ENCODE measurements at regions of chr3 and their contacts with region 1.

Region 1: DNA sequence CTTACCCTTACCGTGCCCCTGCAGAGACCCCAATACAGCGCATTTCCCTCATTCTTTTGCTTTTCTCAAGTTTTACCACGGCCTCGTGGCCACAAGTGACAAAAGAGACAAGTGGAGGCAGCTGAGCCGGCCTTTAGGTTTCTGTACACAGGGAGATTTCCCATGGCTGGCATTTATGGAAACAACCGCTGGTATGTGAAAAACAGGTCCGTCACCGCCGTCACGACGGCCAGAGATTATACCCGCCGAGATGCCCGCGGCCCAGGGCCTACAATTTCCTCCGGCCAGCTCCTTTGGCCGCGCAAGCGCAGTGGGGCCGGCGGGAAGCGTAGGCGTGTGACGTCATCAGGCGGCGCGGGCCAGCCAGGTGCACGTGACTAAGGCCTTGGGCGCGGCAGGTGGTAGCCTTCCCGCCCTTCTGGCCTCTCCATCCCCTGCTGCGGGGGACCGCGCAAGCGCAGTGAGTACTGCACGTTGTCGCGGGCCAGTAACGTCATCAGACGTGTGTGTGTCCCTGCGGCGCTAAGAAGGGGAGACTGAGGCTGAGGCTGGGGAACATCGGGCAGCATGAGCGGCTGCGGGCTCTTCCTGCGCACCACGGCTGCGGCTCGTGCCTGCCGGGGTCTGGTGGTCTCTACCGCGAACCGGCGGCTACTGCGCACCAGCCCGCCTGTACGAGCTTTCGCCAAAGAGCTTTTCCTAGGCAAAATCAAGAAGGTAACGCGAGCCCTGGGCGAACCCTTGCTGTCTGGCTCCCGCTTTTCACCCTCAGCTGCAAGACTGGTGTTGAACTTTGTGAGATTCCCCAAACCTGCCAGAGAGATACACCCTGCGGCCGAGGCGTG is at the start of gene ACAD9:
- DNase-seq: peak; percentile 99
- H3K4me3 ChIP-seq: peak within 1 kb of the TSS; percentile 81 to 91 (median 90)
- H3K27ac ChIP-seq: peak within 1 kb of the TSS; percentile 95
- H3K4me1 ChIP-seq: peaks cover 23% of the 10 kb centered on the region
- H3K27me3 ChIP-seq: peaks cover 3 to 6% of the 10 kb centered on the region in 2 experiments
- CTCF ChIP-seq: no peak
- POLR2A ChIP-seq: peak; percentile 97
- total RNA-seq, gene ACAD9: 56.0 and 65.8 TPM in 2 replicates

Region 2: GRCh38 chr3:128617557-128618397 is 261.6 kb before region 1 on chr3:
- CTCF ChIA-PET with region 1: interaction called, 10 read pairs
- POLR2A ChIA-PET with region 1: no interaction called
- dilution Hi-C with region 1: no loop called
- intact Hi-C with region 1: loop called (anchors 1 kb)
- DNase-seq: peak; percentile 98
- H3K4me3 ChIP-seq: peak overlapping the region; percentile 48 to 65 (median 58)
- H3K27ac ChIP-seq: peak overlapping the region; percentile 53
- H3K4me1 ChIP-seq: peaks cover 35% of the 10 kb centered on the region
- H3K27me3 ChIP-seq: no peaks in the 10 kb centered on the region
- CTCF ChIP-seq: peak; percentile 86 to 98
- POLR2A ChIP-seq: no peak

Region 3: DNA sequence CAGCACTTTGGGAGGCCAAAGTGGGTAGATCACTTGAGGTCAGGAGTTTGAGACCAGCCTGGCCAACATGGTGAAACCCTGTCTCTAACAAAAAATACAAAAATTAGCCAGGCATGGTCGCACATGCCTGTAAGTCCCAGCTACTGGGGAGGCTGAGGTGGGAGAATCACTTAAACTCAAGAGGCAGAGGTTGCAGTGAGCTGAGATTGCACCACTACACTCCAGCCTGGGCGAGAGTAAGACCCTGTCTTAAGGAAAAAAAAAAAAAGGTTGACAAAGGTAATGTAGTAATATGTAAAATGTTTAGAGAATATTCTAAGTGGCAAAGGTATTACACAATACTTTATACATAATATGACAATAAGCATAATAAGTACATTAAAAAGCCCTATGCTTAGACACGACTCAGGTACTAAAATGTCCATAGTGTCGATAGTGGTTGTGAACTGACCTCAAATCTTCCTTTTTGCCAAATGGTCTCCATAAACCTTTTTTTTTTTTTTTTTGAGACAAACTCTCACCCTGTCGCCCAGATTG is 245.2 kb before region 1 on chr3:
- CTCF ChIA-PET with region 1: no interaction called
- POLR2A ChIA-PET with region 1: no interaction called
- dilution Hi-C with region 1: no loop called
- intact Hi-C with region 1: no loop called
- DNase-seq: no peak
- H3K4me3 ChIP-seq: no peak overlapping the region
- H3K27ac ChIP-seq: no peak overlapping the region
- H3K4me1 ChIP-seq: peaks cover 4% of the 10 kb centered on the region
- H3K27me3 ChIP-seq: no peaks in the 10 kb centered on the region
- CTCF ChIP-seq: no peak
- POLR2A ChIP-seq: no peak

Region 4: GRCh38 chr3:128714887-128715491 is 164.4 kb before region 1 on chr3:
- CTCF ChIA-PET with region 1: no interaction called
- POLR2A ChIA-PET with region 1: no interaction called
- dilution Hi-C with region 1: no loop called
- intact Hi-C with region 1: no loop called
- DNase-seq: no peak
- H3K4me3 ChIP-seq: no peak overlapping the region
- H3K27ac ChIP-seq: no peak overlapping the region
- H3K4me1 ChIP-seq: no peaks in the 10 kb centered on the region
- H3K27me3 ChIP-seq: peaks cover 15% of the 10 kb centered on the region in 2 experiments
- CTCF ChIP-seq: no peak
- POLR2A ChIP-seq: no peak

Region 5: GRCh38 chr3:128725932-128726690 is 153.2 kb before region 1 on chr3 and contains the start of gene RAB7A:
- CTCF ChIA-PET with region 1: interaction called, 3 read pairs
- POLR2A ChIA-PET with region 1: no interaction called
- dilution Hi-C with region 1: no loop called
- intact Hi-C with region 1: loop called (anchors 5 kb)
- DNase-seq: peak; percentile 99
- H3K4me3 ChIP-seq: peak within 1 kb of the TSS; percentile 53 to 89 (median 84)
- H3K27ac ChIP-seq: peak within 1 kb of the TSS; percentile 90
- H3K4me1 ChIP-seq: peaks cover 18% of the 10 kb centered on the region
- H3K27me3 ChIP-seq: peaks cover 6 to 7% of the 10 kb centered on the region in 2 experiments
- CTCF ChIP-seq: no peak
- POLR2A ChIP-seq: peak; percentile 90
- total RNA-seq, gene RAB7A: 249 and 262 TPM in 2 replicates

Region 6: GRCh38 chr3:128845778-128846485 is 33.4 kb before region 1 on chr3:
- CTCF ChIA-PET with region 1: interaction called, 10 read pairs
- POLR2A ChIA-PET with region 1: no interaction called
- dilution Hi-C with region 1: no loop called
- intact Hi-C with region 1: no loop called
- DNase-seq: peak; percentile 79
- H3K4me3 ChIP-seq: peak overlapping the region; percentile 37 to 54 (median 54)
- H3K27ac ChIP-seq: no peak overlapping the region
- H3K4me1 ChIP-seq: peaks cover 4% of the 10 kb centered on the region
- H3K27me3 ChIP-seq: no peaks in the 10 kb centered on the region
- CTCF ChIP-seq: peak; percentile 65 to 78
- POLR2A ChIP-seq: no peak

Region 7: DNA sequence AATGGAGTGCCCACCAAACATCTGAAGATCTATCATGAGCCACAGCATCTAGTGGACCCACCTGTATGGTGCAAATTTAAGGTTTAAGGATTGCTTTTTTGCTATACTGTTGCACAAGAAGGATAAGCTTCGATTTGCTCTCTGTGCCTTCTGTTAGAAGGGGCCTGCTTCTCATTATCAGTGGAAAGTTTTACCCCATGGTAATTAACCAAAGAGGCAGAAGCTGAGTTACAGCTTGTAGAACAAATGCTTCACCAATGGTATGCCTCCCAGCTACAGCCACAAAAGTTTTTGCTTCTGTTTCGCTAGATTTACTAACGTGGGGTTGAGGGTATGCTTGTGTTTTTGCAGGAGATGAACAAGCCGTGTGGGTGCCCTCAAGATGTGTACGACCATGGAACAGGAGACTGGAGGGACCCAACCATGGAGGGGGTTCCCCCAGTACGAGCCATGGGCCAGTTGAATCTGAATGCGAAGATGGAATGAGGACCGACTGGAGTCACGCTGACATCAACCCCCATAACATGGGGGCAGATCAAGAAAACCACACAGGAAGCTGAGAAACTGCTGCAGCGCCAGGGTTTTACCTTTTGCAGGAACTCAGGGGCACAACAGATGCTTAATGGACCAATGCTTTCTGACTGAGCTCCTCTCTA is 43.6 kb after region 1 on chr3:
- CTCF ChIA-PET with region 1: no interaction called
- POLR2A ChIA-PET with region 1: no interaction called
- dilution Hi-C with region 1: no loop called
- intact Hi-C with region 1: loop called (anchors 5 kb)
- DNase-seq: no peak
- H3K4me3 ChIP-seq: no peak overlapping the region
- H3K27ac ChIP-seq: no peak overlapping the region
- H3K4me1 ChIP-seq: no peaks in the 10 kb centered on the region
- H3K27me3 ChIP-seq: no peaks in the 10 kb centered on the region
- CTCF ChIP-seq: no peak
- POLR2A ChIP-seq: no peak

Measured in endothelial cell of umbilical vein (primary cell).